ENCODE measurements at regions of chr17 and their contacts with region 1.

Region 1: GRCh38 chr17:7306911-7307686 is at the start of gene EIF5A:
- DNase-seq: peak; percentile 99
- H3K4me3 Mint-ChIP-seq: peak within 1 kb of the TSS; percentile 94
- H3K27ac Mint-ChIP-seq: peak within 1 kb of the TSS; percentile 100
- H3K4me1 Mint-ChIP-seq: peaks cover 24% of the 10 kb centered on the region
- H3K27me3 Mint-ChIP-seq: peaks cover 4% of the 10 kb centered on the region
- total RNA-seq, gene EIF5A: 1,241 and 1,262 TPM in 2 replicates

Region 2: DNA sequence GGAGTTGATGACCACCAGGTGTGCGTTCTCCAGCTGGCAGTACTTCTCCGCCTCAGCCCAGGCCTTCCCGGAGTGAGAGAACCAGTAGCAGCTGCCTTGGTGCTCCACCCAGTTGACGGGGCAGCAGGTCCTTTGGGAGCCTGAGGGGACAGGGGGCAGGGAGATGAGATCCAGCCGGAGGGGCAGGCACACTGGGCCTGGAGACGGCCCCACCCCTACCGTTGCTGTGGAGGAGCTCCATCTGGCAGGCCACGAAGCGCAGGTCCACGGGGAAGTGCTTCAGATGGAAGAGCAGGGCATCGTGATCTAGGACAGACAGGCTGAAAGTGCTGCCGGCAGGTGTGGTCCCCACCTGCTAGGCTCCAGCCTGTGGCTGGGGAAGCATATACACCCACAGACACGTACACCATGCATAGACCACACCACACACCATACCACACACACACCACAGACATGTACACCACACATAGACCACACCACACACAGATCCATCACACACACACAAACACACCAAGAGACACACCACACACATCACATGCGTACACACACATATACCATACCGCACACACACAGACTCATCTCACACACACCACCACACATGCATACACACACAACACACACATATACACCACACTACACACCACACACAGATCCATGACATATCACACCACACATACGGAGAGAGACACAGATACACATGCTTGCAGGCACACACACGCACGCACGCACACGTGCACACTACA is 199.9 kb before region 1 on chr17:
- intact Hi-C with region 1: no loop called
- DNase-seq: no peak
- H3K4me3 Mint-ChIP-seq: no peak overlapping the region
- H3K27ac Mint-ChIP-seq: no peak overlapping the region
- H3K4me1 Mint-ChIP-seq: peaks cover 14% of the 10 kb centered on the region
- H3K27me3 Mint-ChIP-seq: peaks cover 9% of the 10 kb centered on the region

Region 3: GRCh38 chr17:7214300-7215135 is 92.6 kb before region 1 on chr17:
- intact Hi-C with region 1: loop called (anchors 1 kb)
- DNase-seq: peak; percentile 99
- H3K4me3 Mint-ChIP-seq: peak overlapping the region; percentile 91
- H3K27ac Mint-ChIP-seq: peak overlapping the region; percentile 98
- H3K4me1 Mint-ChIP-seq: peaks cover 55% of the 10 kb centered on the region
- H3K27me3 Mint-ChIP-seq: peaks cover 14% of the 10 kb centered on the region

Region 4: DNA sequence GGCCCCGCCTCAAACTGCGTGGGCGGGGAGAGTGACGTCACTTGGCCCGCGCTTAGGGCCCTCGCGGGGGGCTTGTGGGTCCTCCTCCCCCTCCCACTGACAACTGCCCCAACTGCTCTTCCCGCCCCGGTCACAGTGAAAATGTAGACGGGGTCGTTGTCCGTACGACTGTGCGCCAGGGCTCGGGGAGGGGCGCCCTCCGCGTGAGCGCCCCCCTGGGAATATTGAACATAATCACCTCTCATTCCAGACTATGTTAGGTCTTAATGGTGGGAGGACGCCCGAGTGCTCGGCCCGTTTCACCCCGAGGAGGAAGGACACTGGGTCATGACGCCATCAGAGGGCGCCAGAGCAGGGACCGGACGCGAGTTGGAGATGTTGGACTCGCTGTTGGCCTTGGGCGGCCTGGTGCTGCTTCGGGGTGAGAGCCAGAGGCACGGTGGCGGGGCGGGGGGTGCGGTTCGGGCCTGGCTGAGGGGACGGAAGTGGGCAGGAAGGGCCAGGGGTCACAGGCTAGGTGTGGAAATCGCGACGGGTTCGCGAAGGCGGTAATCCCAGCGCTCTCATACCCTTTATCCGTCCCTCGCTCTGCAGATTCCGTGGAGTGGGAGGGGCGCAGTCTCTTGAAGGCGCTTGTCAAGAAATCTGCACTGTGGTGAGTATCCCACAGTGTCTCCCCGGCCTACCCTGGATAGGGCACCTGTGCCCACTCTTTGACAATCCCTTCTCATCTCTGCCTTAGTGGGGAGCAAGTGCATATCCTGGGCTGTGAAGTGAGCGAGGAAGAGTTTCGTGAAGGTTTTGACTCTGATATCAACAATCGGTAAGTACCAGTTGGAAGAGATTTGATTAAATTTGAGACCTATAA is 54.7 kb before region 1 on chr17 and contains the start of gene ELP5:
- intact Hi-C with region 1: loop called (anchors 1 kb)
- DNase-seq: peak; percentile 86
- H3K4me3 Mint-ChIP-seq: peak within 1 kb of the TSS; percentile 98
- H3K27ac Mint-ChIP-seq: peak within 1 kb of the TSS; percentile 99
- H3K4me1 Mint-ChIP-seq: peaks cover 42% of the 10 kb centered on the region
- H3K27me3 Mint-ChIP-seq: peaks cover 5% of the 10 kb centered on the region
- total RNA-seq, gene ELP5: 73.6 and 75.5 TPM in 2 replicates

Region 5: DNA sequence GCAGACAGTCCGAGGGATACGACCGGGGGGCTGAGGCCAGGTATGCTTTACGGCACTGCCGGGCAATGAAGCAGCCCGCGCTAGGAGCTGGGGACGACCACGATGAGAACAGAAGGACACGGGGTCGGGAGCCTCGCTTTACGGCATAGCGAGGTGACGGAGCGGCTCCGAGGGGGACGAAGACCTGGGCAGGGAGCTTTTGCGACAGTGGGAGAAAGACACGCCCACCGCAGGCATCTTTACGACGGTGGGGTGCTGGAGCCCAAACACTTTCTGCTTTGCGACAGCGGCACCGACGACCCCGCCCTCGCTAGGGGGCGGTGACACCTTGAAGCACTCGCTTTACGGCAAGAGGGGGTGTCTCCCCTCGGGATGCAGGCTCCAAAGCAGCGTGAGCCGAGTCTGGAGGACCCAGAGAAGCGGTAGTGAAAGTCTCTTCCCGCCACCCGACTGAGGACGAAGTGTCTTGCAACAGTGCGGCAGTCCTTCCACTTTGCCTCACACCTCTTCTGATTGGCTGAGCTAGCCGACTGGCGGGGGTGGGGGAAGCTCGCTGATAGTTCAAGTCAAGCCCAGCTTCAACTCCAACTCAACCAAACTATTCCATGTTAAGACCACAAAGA is 22.4 kb after region 1 on chr17:
- intact Hi-C with region 1: loop called (anchors 1 kb)
- DNase-seq: peak; percentile 94
- H3K4me3 Mint-ChIP-seq: peak overlapping the region; percentile 93
- H3K27ac Mint-ChIP-seq: peak overlapping the region; percentile 94
- H3K4me1 Mint-ChIP-seq: peaks cover 38% of the 10 kb centered on the region
- H3K27me3 Mint-ChIP-seq: no peaks in the 10 kb centered on the region

Region 6: DNA sequence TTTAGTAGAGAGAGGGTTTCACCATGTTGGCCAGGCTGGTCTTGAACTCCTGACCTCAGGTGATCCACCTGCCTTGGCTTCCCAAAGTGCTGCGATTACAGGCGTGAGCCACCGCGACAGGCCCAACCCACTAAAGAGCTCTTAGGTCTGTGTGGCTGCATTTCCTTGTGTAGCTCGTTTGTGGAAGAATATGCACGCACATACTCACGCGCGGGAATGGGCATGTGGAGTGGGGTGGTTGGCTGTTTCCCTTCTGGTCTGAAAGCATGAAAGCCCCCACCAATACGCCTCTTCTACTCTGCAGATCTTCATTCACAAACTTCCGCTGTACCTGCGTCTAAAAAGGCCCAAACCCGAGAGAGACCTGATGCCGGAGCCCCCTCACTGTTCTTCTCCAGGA is 147.9 kb after region 1 on chr17:
- intact Hi-C with region 1: loop called (anchors 5 kb)
- DNase-seq: no peak
- H3K4me3 Mint-ChIP-seq: peak overlapping the region; percentile 87
- H3K27ac Mint-ChIP-seq: peak overlapping the region; percentile 88
- H3K4me1 Mint-ChIP-seq: peaks cover 31% of the 10 kb centered on the region
- H3K27me3 Mint-ChIP-seq: no peaks in the 10 kb centered on the region

Region 7: DNA sequence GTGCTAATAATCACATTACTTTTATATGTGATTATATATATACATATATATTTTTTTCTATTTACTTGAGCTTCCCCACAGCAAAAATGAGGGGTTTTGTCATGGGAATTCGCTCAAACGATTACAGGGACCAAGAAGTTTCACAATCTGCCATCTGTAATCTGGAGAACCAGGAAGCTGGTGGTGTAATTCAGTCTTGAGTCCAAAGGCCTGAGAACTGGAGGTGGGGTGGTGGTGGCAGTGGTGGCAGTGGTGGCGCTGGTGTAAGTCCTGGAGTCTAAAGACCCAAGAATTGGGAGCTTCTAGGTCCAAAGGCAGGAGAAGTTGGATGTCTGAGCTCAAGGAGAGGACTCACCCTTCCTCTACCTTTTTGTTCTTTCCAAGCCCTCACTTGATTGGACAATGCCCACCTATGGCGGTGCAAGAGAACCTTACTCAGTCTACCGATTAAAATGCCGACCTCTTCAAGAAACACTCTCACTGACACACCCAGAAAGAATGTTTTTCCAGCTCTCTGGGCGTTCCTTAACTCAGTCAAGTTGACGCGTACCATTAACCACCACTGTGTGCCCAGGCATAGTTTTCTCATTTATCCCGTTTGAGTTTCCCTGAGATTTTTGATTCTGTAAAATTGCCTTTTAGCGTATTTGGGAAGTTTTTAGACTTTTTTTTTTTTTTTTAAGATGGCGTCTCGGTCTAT is 209.0 kb after region 1 on chr17:
- intact Hi-C with region 1: no loop called
- DNase-seq: no peak
- H3K4me3 Mint-ChIP-seq: no peak overlapping the region
- H3K27ac Mint-ChIP-seq: peak overlapping the region; percentile 40
- H3K4me1 Mint-ChIP-seq: no peaks in the 10 kb centered on the region
- H3K27me3 Mint-ChIP-seq: no peaks in the 10 kb centered on the region

Region 8: GRCh38 chr17:7844292-7845154 is 537.4 kb after region 1 on chr17:
- intact Hi-C with region 1: loop called (anchors 5 kb)
- DNase-seq: peak; percentile 87
- H3K4me3 Mint-ChIP-seq: peak overlapping the region; percentile 89
- H3K27ac Mint-ChIP-seq: peak overlapping the region; percentile 96
- H3K4me1 Mint-ChIP-seq: peaks cover 37% of the 10 kb centered on the region
- H3K27me3 Mint-ChIP-seq: no peaks in the 10 kb centered on the region

Measured in activated T-helper 1 cell treated with anti-CD3 and anti-CD28 coated beads, Interleukin-12 subunit alpha, Interleukin-12 subunit beta, Interleukin-2, Interleukin-4 antibody, amounts not matched to agents 30 ng/mL and 10 ng/mL and 1 ng/mL, durations not matched to agents 14 hours and 24 hours and 36 hours (primary cell).